IMR-90 (cell line): ENCODE measurements at regions of chr13 and their contacts with region 1.

Region 1: GRCh38 chr13:113863436-113864272 is at the start of gene GAS6:
- DNase-seq: no peak
- ATAC-seq: peak; percentile 63
- H3K4me3 ChIP-seq: peak within 1 kb of the TSS; percentile 93
- H3K27ac ChIP-seq: peak within 1 kb of the TSS; percentile 97
- H3K4me1 ChIP-seq: peaks cover 25% of the 10 kb centered on the region
- H3K27me3 ChIP-seq: no peaks in the 10 kb centered on the region
- CTCF ChIP-seq: no peak; the same call in 1 of the 2 replicates
- POLR2A ChIP-seq: no peak
- RAD21 ChIP-seq: no peak
- total RNA-seq, gene GAS6: 212 and 220 TPM in 2 replicates

Region 2: DNA sequence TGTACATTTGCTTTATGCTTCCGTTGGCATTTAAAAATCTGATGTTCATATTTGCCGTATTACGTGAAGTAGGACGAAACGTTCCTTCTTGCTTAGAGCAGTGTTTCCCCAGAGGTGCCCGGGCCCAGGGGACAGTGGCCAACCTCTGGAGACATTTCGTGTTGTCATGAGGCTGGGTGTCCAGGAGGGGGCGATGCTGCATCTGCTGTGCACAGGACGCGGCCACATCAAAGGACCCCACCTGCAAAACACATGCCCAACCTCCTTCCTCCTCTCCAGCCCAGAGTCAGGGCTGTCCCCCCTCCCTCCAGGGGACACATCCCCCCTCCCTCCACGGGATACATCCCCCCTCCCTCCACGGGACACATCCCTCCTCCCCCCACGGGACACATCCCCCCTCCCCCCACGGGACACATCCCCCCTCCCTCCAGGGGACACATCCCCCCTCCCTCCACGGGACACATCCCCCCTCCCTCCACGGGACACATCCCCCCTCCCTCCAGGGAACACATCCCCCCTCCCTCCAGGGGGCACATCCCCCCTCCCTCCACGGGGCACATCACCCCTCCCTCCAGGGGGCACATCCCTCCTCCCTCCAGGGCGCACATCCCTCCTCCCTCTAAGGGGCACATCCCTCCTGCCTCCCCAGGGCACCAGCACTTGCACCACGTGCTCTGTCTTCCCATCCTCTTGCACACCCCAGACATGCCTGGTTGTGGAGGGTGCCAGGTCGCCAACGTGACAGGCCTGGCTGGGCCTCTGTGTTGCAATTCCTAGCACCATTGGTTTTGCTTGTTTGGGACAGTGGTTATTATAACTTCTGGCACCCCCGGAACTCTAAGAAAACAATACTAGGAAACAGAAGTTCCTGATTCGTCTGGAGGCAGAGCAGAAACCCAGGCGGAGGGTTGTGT is 46.5 kb before region 1 on chr13:
- CTCF ChIA-PET with region 1: no interaction called
- POLR2A ChIA-PET with region 1: no interaction called
- dilution Hi-C with region 1: no loop called
- in situ Hi-C with region 1: no loop called
- intact Hi-C with region 1: loop called (anchors 2 kb)
- DNase-seq: peak; percentile 83
- ATAC-seq: peak; percentile 3
- H3K4me3 ChIP-seq: no peak overlapping the region
- H3K27ac ChIP-seq: peak overlapping the region; percentile 3; the same call in 1 of the 2 replicates
- H3K4me1 ChIP-seq: peaks cover 32% of the 10 kb centered on the region
- H3K27me3 ChIP-seq: no peaks in the 10 kb centered on the region
- CTCF ChIP-seq: peak; percentile 78
- POLR2A ChIP-seq: no peak
- RAD21 ChIP-seq: peak; percentile 80

Region 3: GRCh38 chr13:113897161-113897560 is 33.5 kb after region 1 on chr13:
- CTCF ChIA-PET with region 1: no interaction called
- POLR2A ChIA-PET with region 1: no interaction called
- dilution Hi-C with region 1: no loop called
- in situ Hi-C with region 1: no loop called
- intact Hi-C with region 1: loop called (anchors 2 kb)
- DNase-seq: peak; percentile 98
- ATAC-seq: peak; percentile 91
- H3K4me3 ChIP-seq: no peak overlapping the region
- H3K27ac ChIP-seq: peak overlapping the region; percentile 94
- H3K4me1 ChIP-seq: peaks cover 26% of the 10 kb centered on the region
- H3K27me3 ChIP-seq: no peaks in the 10 kb centered on the region
- CTCF ChIP-seq: no peak
- POLR2A ChIP-seq: peak; percentile 54; the same call in 1 of the 2 replicates
- RAD21 ChIP-seq: peak; percentile 1; the same call in 1 of the 2 replicates

Region 4: GRCh38 chr13:113907635-113908617 is 44.3 kb after region 1 on chr13:
- CTCF ChIA-PET with region 1: no interaction called
- POLR2A ChIA-PET with region 1: interaction called, 6 read pairs
- dilution Hi-C with region 1: no loop called
- in situ Hi-C with region 1: no loop called
- intact Hi-C with region 1: loop called (anchors 2 kb)
- DNase-seq: peak; percentile 97
- ATAC-seq: peak; percentile 74
- H3K4me3 ChIP-seq: peak overlapping the region; percentile 21; the same call in 1 of the 2 replicates
- H3K27ac ChIP-seq: peak overlapping the region; percentile 61
- H3K4me1 ChIP-seq: peaks cover 22% of the 10 kb centered on the region
- H3K27me3 ChIP-seq: no peaks in the 10 kb centered on the region
- CTCF ChIP-seq: no peak
- POLR2A ChIP-seq: no peak
- RAD21 ChIP-seq: peak; percentile 4; the same call in 1 of the 2 replicates

Region 5: DNA sequence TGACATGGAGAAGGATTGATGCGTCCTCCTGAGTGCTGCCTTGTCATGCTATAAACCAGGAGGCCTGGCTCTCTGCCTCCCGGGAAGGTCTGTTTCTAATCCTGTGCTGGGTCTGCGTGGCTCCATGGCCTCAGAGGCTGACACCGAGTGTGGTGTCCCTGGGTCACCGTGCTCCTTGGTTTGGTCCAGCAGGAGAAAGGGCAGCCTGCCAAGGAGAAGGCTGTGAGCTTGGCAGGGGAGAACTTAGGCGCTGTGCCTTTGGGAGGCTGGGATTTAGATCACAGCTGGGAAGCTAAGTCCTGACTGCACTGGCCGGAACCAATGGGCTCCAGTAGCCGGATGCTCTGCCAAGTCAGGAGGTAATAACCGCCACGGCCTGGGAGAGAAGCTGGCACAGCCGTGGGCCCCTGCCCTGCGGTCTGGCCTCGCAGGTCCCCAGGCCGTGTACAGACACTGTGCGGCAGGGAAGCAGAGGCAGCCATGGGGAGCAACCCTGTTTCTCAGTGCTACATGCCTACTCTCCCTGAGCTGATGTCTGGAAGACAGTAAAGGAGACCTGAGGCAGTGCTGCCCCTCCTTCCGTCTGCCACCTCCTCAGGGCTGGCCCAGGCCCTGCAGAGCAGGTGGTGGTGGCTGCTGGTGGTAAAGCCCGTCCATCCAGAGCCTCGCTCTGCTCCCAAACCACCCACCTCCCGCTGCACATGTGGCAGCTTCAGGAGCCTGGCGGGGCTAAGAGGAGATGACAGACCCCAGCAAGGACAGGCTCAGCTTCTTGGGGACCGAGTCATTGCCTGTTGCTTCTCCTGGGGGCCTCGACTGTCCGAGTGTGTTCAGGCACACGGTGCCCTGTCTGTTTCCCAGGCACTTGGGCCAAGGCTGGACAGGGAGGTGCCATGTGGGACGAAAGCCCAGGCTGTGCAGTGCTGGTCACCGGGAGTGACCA is 65.3 kb after region 1 on chr13:
- CTCF ChIA-PET with region 1: no interaction called
- POLR2A ChIA-PET with region 1: no interaction called
- dilution Hi-C with region 1: no loop called
- in situ Hi-C with region 1: no loop called
- intact Hi-C with region 1: loop called (anchors 1 kb)
- DNase-seq: peak; percentile 69
- ATAC-seq: peak; percentile 37
- H3K4me3 ChIP-seq: no peak overlapping the region
- H3K27ac ChIP-seq: peak overlapping the region; percentile 71
- H3K4me1 ChIP-seq: peaks cover 29% of the 10 kb centered on the region
- H3K27me3 ChIP-seq: no peaks in the 10 kb centered on the region
- CTCF ChIP-seq: no peak
- POLR2A ChIP-seq: no peak
- RAD21 ChIP-seq: no peak

Region 6: DNA sequence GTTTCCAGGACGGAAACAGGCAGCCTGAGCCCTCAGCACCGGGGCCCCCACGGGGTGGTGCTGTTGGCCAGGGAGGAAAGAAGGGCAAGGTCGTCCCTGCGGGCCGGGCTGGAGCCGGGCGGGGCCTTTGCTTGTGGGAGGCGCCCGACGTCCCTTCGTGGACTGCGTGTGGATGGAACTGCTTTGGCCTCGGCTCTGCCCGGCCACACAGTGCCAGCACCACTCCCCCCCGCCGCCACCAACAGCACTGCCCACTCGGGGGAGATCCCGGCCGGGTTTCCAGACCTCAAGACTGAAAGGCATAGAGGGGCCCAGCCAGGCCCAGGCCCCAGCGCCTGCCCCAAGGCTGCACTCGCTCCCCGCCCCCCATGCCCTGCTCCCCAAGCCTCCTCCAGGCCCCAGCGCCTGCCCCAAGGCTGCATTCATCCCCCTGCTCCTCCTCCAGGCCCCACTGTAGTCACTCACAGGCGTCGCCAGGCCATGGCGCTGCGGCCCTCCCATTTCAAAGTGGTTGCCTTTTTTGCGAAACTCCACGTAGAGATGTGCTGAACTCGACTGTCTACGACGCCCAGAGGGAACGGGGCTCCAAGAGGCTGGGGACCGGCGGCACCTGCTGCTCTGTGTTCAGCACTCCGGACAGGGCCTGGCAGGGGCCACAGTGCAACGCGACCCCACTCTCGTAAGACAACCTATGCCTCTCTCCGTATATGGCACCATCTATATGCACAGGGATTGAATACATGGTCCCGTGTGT is 87.8 kb after region 1 on chr13:
- CTCF ChIA-PET with region 1: no interaction called
- POLR2A ChIA-PET with region 1: no interaction called
- dilution Hi-C with region 1: no loop called
- in situ Hi-C with region 1: no loop called
- intact Hi-C with region 1: loop called (anchors 5 kb)
- DNase-seq: peak; percentile 45
- ATAC-seq: peak; percentile 74
- H3K4me3 ChIP-seq: no peak overlapping the region
- H3K27ac ChIP-seq: no peak overlapping the region
- H3K4me1 ChIP-seq: peaks cover 13% of the 10 kb centered on the region
- H3K27me3 ChIP-seq: no peaks in the 10 kb centered on the region
- CTCF ChIP-seq: peak; percentile 65
- POLR2A ChIP-seq: no peak
- RAD21 ChIP-seq: peak; percentile 75

Region 7: DNA sequence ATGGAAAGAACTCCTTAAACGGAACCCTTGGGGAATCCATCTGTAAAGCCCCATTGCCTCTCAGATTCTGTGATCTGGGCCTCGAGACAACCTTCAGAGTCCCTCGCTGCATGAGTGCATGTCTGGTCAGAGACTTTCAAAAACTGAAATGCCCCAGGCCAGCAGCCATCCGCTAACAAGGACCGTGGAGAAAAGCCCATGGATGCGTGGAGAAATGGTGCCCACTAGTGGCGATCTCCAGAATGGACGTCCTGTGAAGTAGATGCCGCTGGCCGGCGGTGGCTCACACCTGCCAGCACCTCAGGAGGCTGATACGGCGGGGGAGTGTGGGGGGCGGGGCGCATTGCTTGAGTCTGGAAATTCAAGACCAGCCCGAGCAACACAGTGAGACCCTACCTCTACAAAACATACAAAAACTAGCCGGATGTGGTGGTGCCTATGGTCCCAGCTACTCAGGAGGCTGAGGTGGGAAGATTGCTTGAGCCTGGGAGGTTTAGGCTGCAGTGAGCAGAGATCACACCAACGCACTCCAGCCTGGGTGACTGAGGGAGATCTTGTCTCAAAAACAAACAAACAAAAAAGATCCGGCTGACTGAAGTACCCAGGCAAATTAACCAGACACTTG is 363.2 kb after region 1 on chr13:
- CTCF ChIA-PET with region 1: no interaction called
- POLR2A ChIA-PET with region 1: no interaction called
- dilution Hi-C with region 1: no loop called
- in situ Hi-C with region 1: no loop called
- intact Hi-C with region 1: loop called (anchors 5 kb)
- DNase-seq: peak; percentile 79
- ATAC-seq: peak; percentile 93
- H3K4me3 ChIP-seq: no peak overlapping the region
- H3K27ac ChIP-seq: no peak overlapping the region
- H3K4me1 ChIP-seq: peaks cover 10% of the 10 kb centered on the region
- H3K27me3 ChIP-seq: no peaks in the 10 kb centered on the region
- CTCF ChIP-seq: peak; percentile 97
- POLR2A ChIP-seq: peak; percentile 63; the same call in 1 of the 2 replicates
- RAD21 ChIP-seq: peak; percentile 99